ENCODE measurements at regions of chr17 and their contacts with region 1.

Region 1: GRCh38 chr17:8118769-8119580 is 661 bp upstream of the ALOXE3 start:
- DNase-seq: peak; percentile 91
- ATAC-seq: peak; percentile 44
- H3K4me3 Mint-ChIP-seq: peak overlapping the region; percentile 85
- H3K27ac Mint-ChIP-seq: 0 out of 2 replicates have a peak overlapping the region, but pooled peaks have one; percentile 69
- H3K4me1 Mint-ChIP-seq: peaks cover 9% of the 10 kb centered on the region
- H3K27me3 Mint-ChIP-seq: peaks cover 73% of the 10 kb centered on the region
- CTCF ChIP-seq: peak; percentile 41; the same call in 1 of the 2 replicates

Region 2: DNA sequence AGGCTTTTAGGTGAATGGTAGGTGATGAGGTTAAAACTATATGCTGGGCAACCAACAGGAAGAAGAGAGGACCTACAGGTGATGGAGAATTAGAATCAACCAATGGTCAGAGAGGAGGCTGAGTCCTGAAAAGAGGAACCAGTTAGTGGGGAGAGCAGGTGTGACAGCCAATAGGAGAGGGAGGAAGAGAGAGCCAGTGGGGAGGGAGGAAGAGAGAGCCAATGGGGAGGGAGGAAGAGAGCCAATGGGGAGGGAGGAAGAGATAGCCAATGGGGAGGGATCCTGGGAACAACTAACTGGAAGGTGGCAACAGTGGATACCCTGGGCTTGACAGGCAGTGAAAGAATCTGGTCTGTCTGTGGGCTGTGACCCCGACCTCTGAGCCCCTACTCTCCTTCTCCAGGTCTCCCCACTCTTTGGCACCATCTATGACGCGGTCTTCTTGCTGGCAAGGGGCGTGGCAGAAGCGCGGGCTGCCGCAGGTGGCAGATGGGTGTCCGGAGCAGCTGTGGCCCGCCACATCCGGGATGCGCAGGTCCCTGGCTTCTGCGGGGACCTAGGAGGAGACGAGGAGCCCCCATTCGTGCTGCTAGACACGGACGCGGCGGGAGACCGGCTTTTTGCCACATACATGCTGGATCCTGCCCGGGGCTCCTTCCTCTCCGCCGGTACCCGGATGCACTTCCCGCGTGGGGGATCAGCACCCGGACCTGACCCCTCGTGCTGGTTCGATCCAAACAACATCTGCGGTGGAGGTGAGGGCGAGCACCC is 112.8 kb before region 1 on chr17:
- CTCF ChIA-PET with region 1: no interaction called
- POLR2A ChIA-PET with region 1: no interaction called
- DNase-seq: no peak
- ATAC-seq: peak; percentile 49
- H3K4me3 Mint-ChIP-seq: no peak overlapping the region
- H3K27ac Mint-ChIP-seq: no peak overlapping the region
- H3K4me1 Mint-ChIP-seq: peaks cover 19% of the 10 kb centered on the region
- H3K27me3 Mint-ChIP-seq: peaks cover 54% of the 10 kb centered on the region
- CTCF ChIP-seq: no peak

Region 3: DNA sequence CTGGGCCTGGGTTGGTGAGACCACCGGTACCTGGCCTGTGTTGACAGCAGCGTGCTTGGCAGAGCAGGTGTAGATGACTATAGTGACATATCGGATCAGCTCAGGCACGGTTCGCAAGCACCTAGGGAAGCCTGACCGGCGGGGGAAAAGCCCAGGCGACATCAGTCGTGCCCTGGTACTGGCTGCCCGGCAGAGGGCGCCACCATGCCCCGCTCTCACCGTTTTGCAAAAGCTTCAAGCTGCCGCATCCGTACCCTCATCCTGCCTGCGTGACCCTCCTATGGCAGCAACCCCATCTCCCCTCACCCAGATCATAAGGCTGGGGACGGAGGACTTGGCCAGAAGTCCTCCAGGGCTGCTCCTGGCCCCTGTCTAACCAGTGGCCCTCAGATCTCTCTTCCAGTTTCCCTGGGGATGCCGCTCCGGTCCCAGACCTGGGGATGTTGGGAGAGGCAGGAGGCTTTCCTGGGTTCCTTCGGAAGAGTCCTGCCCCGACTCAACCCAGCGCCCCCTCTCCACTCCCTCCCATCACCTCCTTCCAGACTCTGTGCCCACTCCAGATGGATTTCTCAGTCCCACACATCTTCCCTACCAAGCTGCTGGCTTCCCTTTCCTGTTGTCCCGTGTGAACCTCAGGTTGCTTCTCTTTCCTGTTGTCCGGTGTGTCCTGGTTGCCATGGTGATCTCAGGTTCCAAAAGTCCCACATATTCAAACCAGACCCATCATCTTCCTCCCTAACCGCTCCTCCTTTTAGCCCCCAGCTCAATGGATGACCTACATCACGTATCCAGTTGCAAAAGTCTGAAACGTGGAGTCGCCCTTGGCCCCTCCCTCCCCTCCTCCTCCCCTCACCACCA is 45.1 kb before region 1 on chr17:
- CTCF ChIA-PET with region 1: interaction called, 77 read pairs
- POLR2A ChIA-PET with region 1: interaction called, 4 read pairs
- DNase-seq: peak; percentile 92
- ATAC-seq: peak; percentile 82
- H3K4me3 Mint-ChIP-seq: peak overlapping the region; percentile 76
- H3K27ac Mint-ChIP-seq: no peak overlapping the region
- H3K4me1 Mint-ChIP-seq: peaks cover 23% of the 10 kb centered on the region
- H3K27me3 Mint-ChIP-seq: peaks cover 96% of the 10 kb centered on the region
- CTCF ChIP-seq: peak; percentile 89

Region 4: DNA sequence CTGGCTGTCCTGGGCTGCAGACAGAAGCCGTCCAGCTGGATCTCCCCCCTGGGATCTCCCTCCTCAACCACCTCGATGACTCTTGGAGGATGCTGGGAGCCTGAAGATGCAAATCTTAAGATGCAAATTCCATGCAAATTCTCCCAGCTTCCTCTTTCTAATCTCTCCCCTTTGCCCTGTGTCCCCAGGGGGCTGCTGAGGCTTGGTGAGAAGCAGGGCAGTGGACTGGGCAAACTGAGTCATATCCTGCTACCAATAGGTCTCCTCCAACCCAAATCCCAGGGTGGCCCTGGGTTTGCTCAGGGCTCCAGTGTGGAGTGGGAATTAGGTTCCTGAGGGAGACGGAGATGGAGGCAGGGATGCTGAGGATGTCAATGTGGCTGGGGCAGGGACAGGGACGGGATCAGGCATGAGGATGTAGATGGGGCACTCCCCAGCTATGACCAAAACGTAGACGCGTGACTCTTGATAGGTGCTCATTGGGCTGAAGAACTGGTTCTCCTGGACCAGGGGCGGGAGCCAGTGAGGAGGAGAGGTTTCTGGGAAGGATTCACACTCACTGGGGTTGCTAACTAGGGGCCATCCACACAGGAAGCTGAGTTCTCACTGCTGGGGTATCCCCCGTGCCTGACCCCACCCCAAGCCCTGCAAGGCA is 27.8 kb before region 1 on chr17:
- CTCF ChIA-PET with region 1: interaction called, 56 read pairs
- POLR2A ChIA-PET with region 1: no interaction called
- DNase-seq: no peak
- ATAC-seq: no peak; the same call in 1 of the 2 replicates
- H3K4me3 Mint-ChIP-seq: no peak overlapping the region
- H3K27ac Mint-ChIP-seq: no peak overlapping the region
- H3K4me1 Mint-ChIP-seq: peaks cover 16% of the 10 kb centered on the region
- H3K27me3 Mint-ChIP-seq: peaks cover 34% of the 10 kb centered on the region
- CTCF ChIP-seq: no peak

Region 5: GRCh38 chr17:8138672-8139371 is 19.8 kb after region 1 on chr17:
- CTCF ChIA-PET with region 1: interaction called, 25 read pairs
- POLR2A ChIA-PET with region 1: interaction called, 7 read pairs
- DNase-seq: peak; percentile 97
- ATAC-seq: peak; percentile 91
- H3K4me3 Mint-ChIP-seq: no peak overlapping the region
- H3K27ac Mint-ChIP-seq: no peak overlapping the region
- H3K4me1 Mint-ChIP-seq: peaks cover 8% of the 10 kb centered on the region
- H3K27me3 Mint-ChIP-seq: no peaks in the 10 kb centered on the region; the same call in 1 of the 2 replicates
- CTCF ChIP-seq: peak; percentile 83

Region 6: GRCh38 chr17:8189711-8190477 is 70.9 kb after region 1 on chr17 and contains the start of gene BORCS6:
- CTCF ChIA-PET with region 1: interaction called, 15 read pairs
- POLR2A ChIA-PET with region 1: interaction called, 4 read pairs
- DNase-seq: peak; percentile 95
- ATAC-seq: peak; percentile 56
- H3K4me3 Mint-ChIP-seq: no peak within 1 kb of the TSS
- H3K27ac Mint-ChIP-seq: peak within 1 kb of the TSS; percentile 78
- H3K4me1 Mint-ChIP-seq: peaks cover 7% of the 10 kb centered on the region
- H3K27me3 Mint-ChIP-seq: no peaks in the 10 kb centered on the region; the same call in 1 of the 2 replicates
- CTCF ChIP-seq: no peak
- total RNA-seq, gene BORCS6: 5.0 to 5.6 TPM (median 5.1 TPM) in 3 replicates

Measured in WTC11 (cell line).